Activated CD4-positive, alpha-beta T cell treated with anti-CD3 and anti-CD28 coated beads for 36 hours (primary cell): ENCODE measurements at regions of chr2 and their contacts with region 1.

Region 1: GRCh38 chr2:113692698-113693428 is 63.6 kb downstream of the SLC35F5 start:
- DNase-seq: peak; percentile 61
- ATAC-seq: peak; percentile 86
- H3K4me3 Mint-ChIP-seq: peak overlapping the region; percentile 63
- H3K27ac Mint-ChIP-seq: peak overlapping the region; percentile 96
- H3K4me1 Mint-ChIP-seq: peaks cover 47% of the 10 kb centered on the region
- H3K27me3 Mint-ChIP-seq: no peaks in the 10 kb centered on the region

Region 2: DNA sequence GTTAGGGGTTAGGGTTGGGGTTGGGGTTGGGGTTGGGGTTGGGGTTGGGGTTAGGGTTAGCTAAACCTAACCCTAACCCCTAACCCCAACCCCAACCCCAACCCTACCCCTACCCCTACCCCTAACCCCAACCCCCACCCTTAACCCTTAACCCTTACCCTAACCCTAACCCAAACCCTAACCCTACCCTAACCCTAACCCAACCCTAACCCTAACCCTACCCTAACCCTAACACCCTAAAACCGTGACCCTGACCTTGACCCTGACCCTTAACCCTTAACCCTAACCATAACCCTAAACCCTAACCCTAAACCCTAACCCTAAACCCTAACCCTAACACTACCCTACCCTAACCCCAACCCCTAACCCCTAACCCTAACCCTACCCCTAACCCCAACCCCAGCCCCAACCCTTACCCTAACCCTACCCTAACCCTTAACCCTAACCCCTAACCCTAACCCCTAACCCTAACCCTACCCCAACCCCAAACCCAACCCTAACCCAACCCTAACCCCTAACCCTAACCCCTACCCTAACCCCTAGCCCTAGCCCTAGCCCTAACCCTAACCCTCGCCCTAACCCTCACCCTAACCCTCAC is 89.9 kb before region 1 on chr2:
- CTCF ChIA-PET with region 1: interaction called, 3 read pairs
- POLR2A ChIA-PET with region 1: no interaction called
- intact Hi-C with region 1: loop called (anchors 2 to 10 kb)
- DNase-seq: peak; percentile 6
- ATAC-seq: peak; percentile 47
- H3K4me3 Mint-ChIP-seq: peak overlapping the region; percentile 82
- H3K27ac Mint-ChIP-seq: peak overlapping the region; percentile 90
- H3K4me1 Mint-ChIP-seq: peaks cover 7% of the 10 kb centered on the region
- H3K27me3 Mint-ChIP-seq: no peaks in the 10 kb centered on the region

Region 3: GRCh38 chr2:113734185-113734584 is 41.3 kb after region 1 on chr2:
- CTCF ChIA-PET with region 1: no interaction called
- POLR2A ChIA-PET with region 1: no interaction called
- intact Hi-C with region 1: no loop called
- DNase-seq: peak; percentile 29
- ATAC-seq: peak; percentile 93
- H3K4me3 Mint-ChIP-seq: no peak overlapping the region
- H3K27ac Mint-ChIP-seq: no peak overlapping the region
- H3K4me1 Mint-ChIP-seq: peaks cover 9% of the 10 kb centered on the region
- H3K27me3 Mint-ChIP-seq: no peaks in the 10 kb centered on the region

Region 4: DNA sequence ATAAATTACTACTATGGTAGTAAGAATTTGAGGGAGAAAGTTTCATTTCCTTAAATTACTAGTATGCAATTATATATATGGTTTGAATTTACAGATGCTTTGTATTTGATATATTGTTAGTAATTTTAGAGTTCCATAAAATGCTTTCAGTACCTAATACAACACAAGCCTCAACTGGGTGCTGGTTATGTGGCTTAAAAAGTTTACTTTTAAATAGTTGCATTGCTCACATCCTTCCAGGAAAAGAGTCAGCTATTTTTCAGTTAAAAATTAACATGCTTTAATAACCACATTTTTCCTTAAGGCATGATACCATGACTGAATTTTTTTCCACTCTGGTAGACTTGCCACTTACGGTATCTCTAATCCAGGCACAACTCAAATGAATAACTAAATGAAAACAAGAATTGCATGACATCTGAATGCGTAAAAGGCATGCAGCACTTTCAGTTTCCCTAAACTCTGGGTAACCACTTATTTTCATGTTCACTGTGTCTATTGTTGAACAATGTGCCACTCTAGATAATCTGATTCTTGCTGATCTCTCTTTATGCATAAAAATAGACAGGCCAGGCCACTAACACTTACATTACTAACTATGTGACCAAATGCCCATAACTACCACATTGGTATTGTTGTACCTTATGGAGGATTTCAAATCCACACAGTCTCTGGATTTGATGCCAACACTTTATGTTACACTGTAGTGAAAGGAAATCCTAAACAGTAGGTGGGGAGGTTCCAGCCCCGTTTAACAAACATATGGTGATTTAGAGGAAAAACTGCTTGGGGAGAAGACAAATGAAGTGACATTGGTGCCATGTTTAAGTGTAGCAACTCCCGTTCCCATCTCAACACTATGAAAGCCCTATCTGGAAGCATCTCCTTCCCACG is 99.1 kb after region 1 on chr2:
- CTCF ChIA-PET with region 1: no interaction called
- POLR2A ChIA-PET with region 1: no interaction called
- intact Hi-C with region 1: loop called in 1 of 2 experiments (anchors 1 kb)
- DNase-seq: peak; percentile 20
- ATAC-seq: peak; percentile 86
- H3K4me3 Mint-ChIP-seq: peak overlapping the region; percentile 4
- H3K27ac Mint-ChIP-seq: peak overlapping the region; percentile 89
- H3K4me1 Mint-ChIP-seq: peaks cover 34% of the 10 kb centered on the region
- H3K27me3 Mint-ChIP-seq: no peaks in the 10 kb centered on the region

Region 5: GRCh38 chr2:113876503-113877387 is 183.9 kb after region 1 on chr2:
- CTCF ChIA-PET with region 1: no interaction called
- POLR2A ChIA-PET with region 1: interaction called, 6 read pairs
- intact Hi-C with region 1: loop called in 1 of 2 experiments (anchors 2 kb)
- DNase-seq: peak; percentile 92
- ATAC-seq: peak; percentile 93
- H3K4me3 Mint-ChIP-seq: peak overlapping the region; percentile 27
- H3K27ac Mint-ChIP-seq: peak overlapping the region; percentile 79
- H3K4me1 Mint-ChIP-seq: peaks cover 43% of the 10 kb centered on the region
- H3K27me3 Mint-ChIP-seq: no peaks in the 10 kb centered on the region

Region 6: DNA sequence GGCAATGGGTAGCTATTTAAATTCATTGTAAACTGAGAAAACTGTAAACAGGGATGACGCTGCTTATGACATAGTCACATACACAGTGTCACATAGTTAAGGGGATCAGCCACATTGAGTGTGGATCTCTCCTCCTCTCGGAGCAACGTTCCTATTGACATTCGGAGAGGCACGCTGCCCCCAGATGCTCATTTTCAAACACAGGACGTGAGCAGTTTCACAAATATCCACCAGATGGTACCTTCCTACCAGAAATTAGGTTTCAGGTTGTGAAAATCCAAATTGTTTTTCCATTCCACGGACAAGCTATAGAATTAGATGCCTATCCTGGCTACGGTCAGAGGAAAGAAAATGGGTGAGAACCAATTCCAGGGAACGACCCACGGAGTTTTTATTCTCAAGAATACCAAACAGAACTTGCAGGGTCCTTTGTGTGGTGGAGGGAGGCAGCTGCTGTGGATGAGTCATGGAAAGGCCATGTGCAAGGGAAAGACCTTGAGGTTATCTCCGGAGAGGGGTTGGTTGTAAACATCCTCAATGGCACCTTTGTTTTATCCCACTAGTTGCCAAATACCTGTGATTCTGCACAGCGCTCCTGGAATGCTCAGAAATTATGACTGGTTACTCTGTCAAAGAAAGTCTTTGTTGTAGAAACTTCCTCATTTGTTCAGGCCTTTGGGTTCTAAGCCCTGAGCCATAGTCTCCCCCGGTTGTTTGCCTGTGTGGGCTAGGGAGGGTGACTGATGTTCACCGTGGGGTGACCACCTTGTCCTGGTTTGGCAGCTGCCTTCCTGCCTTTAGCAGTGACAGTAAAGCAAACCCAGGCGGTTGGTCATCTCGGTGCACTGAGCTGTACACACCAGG is 285.0 kb after region 1 on chr2:
- CTCF ChIA-PET with region 1: interaction called, 3 read pairs
- POLR2A ChIA-PET with region 1: no interaction called
- intact Hi-C with region 1: loop called in 1 of 2 experiments (anchors 2 kb)
- DNase-seq: peak; percentile 12
- ATAC-seq: no peak
- H3K4me3 Mint-ChIP-seq: no peak overlapping the region
- H3K27ac Mint-ChIP-seq: no peak overlapping the region
- H3K4me1 Mint-ChIP-seq: peaks cover 5% of the 10 kb centered on the region
- H3K27me3 Mint-ChIP-seq: no peaks in the 10 kb centered on the region